ENCODE measurements at regions of chr20 and their contacts with region 1.

Region 1: GRCh38 chr20:58236612-58237330 is 8.3 kb upstream of the ANKRD60 start:
- DNase-seq: peak; percentile 5
- H3K4me3 ChIP-seq: peak overlapping the region; percentile 26 to 69 (median 48)
- H3K27ac ChIP-seq: peak overlapping the region in 1 of 4 donors; percentile 11
- H3K4me1 ChIP-seq: peaks cover 0 to 13% (median 0%) of the 10 kb centered on the region in 3 donors
- H3K27me3 ChIP-seq: no peaks in the 10 kb centered on the region
- CTCF ChIP-seq: peak; percentile 86 to 96 (median 94)
- POLR2A ChIP-seq: no peak

Region 2: DNA sequence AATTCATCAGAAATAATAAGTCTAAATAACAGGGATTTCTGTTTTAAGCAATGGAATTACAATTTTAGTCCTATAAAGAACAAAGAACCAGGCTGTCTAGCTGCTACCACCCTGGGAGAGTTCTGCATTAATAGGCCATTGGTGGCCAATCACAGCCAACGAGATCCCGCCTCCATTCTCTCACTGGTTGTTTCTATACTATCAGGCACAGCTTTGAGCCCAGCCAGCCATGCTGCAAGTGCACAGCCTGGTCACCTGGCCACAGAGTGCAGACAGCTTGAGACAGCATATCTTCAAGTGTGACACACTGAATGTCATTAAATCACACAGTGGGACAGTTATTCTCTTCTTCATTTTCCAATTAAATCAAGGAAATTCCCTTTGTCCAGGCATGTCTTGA is 56.7 kb after region 1 on chr20:
- intact Hi-C with region 1: no loop called
- DNase-seq: no peak
- H3K4me3 ChIP-seq: no peak overlapping the region
- H3K27ac ChIP-seq: no peak overlapping the region
- H3K4me1 ChIP-seq: no peaks in the 10 kb centered on the region
- H3K27me3 ChIP-seq: no peaks in the 10 kb centered on the region
- CTCF ChIP-seq: no peak
- POLR2A ChIP-seq: no peak

Region 3: DNA sequence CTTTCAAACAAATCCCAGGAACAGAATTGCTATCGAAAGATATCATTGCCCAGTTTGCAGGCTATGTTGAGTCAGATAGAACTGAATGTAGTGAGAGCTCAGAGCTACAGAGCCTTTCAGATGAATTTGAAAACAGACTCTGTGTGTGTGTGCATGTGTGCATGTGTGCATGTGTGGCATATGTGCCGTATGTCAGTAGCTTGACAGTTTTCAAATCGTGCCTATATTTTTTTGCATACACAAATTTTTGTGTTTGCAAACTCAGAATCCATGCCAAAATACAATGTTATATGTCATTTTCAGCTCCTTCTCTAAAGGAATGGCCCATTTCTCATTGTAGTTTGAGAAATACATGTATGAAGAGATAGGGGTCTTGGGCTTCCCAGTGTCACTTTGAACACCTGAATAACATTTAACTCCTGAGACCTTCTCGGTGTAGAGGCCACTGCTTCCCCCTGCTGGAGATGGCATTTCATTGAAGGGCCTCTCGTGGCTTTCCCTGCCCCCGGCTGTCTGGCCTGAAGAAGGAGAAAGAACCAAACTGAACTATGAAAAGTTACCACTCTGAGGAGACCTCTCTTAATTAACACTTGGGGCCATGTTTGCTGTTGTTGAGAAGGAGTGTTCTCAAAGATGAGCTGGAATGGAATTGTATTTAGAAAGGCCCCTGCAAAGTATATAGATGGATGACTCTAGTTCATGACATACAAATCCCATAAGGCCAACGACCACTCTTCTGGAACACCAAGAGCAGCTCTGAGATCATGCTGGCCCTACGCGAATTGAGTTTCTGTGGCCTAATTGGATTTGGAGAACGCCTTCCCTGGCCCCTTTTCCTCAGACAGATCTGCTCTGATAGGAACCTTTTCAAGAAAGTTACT is 211.0 kb after region 1 on chr20:
- intact Hi-C with region 1: loop called (anchors 10 kb)
- DNase-seq: no peak
- H3K4me3 ChIP-seq: no peak overlapping the region
- H3K27ac ChIP-seq: no peak overlapping the region
- H3K4me1 ChIP-seq: no peaks in the 10 kb centered on the region
- H3K27me3 ChIP-seq: no peaks in the 10 kb centered on the region
- CTCF ChIP-seq: peak; percentile 32 to 64 (median 42)
- POLR2A ChIP-seq: no peak